ENCODE measurements at regions of chr7 and their contacts with region 1.

Region 1: GRCh38 chr7:151110941-151111645 is 24.8 kb downstream of the AGAP3 start:
- DNase-seq: peak; percentile 96
- H3K4me3 ChIP-seq: no peak overlapping the region; a peak in 1 of 4 replicates
- H3K27ac ChIP-seq: no peak overlapping the region
- H3K4me1 ChIP-seq: peaks cover 24 to 36% of the 10 kb centered on the region in 2 experiments
- H3K27me3 ChIP-seq: no peaks in the 10 kb centered on the region
- CTCF ChIP-seq: peak; percentile 94
- EP300 ChIP-seq: no peak
- RAD21 ChIP-seq: peak; percentile 90

Region 2: GRCh38 chr7:151008511-151009323 is 102.4 kb before region 1 on chr7:
- CTCF ChIA-PET with region 1: interaction called, 101 read pairs
- POLR2A ChIA-PET with region 1: no interaction called
- DNase-seq: peak; percentile 80
- H3K4me3 ChIP-seq: peak overlapping the region in 1 of 2 experiments; percentile 31; a peak in 1 of 4 replicates
- H3K27ac ChIP-seq: no peak overlapping the region
- H3K4me1 ChIP-seq: peaks cover 0 to 24% of the 10 kb centered on the region in 2 experiments; a peak in 1 of 4 replicates
- H3K27me3 ChIP-seq: 0 out of 2 replicates have a peak, but pooled peaks cover 5% of the 10 kb centered on the region
- CTCF ChIP-seq: peak; percentile 59
- EP300 ChIP-seq: no peak
- RAD21 ChIP-seq: no peak

Region 3: GRCh38 chr7:151046603-151047504 is 64.2 kb before region 1 on chr7:
- CTCF ChIA-PET with region 1: interaction called, 10 read pairs
- POLR2A ChIA-PET with region 1: no interaction called
- DNase-seq: peak; percentile 88
- H3K4me3 ChIP-seq: no peak overlapping the region
- H3K27ac ChIP-seq: peak overlapping the region; percentile 61 to 78
- H3K4me1 ChIP-seq: peaks cover 13 to 39% of the 10 kb centered on the region in 2 experiments
- H3K27me3 ChIP-seq: no peaks in the 10 kb centered on the region
- CTCF ChIP-seq: no peak
- EP300 ChIP-seq: no peak; a peak in 1 of 4 replicates
- RAD21 ChIP-seq: no peak

Region 4: DNA sequence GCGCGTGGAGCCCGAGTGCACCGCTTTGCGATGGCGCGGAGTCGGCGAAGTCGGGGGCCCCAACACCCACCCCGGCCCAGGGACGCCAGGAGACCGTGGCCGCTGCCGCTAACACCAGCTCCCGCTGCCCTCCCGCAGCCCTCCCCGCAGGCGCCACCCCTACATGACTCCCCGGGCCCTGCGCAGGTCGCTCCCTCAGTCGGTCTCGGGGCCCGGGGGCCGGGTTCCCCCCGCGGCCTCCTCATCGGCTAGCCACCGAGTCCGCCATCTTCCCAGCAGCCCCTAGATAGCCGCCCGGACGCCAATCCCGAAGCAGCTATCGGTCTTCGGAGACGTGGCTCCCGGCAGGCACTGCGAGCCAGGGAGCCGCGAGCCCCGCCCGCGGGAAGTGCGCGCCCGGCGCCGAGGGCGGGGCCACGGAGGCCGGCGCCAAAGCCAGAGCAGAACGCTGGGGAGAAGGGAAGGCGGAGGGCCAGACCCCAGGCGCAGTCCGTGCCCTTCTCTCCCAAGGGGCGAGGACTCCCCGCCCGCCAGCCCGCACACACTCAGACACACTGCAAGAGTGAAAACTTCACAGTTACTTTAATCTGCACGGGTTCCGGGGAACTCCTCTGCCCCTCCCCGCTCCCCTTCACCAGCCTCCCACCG is 30.4 kb before region 1 on chr7 and contains the start of gene FASTK:
- CTCF ChIA-PET with region 1: interaction called, 474 read pairs
- POLR2A ChIA-PET with region 1: interaction called, 5 read pairs
- DNase-seq: peak; percentile 99
- H3K4me3 ChIP-seq: peak within 1 kb of the TSS; percentile 94 to 99
- H3K27ac ChIP-seq: peak within 1 kb of the TSS; percentile 78 to 95
- H3K4me1 ChIP-seq: peaks cover 30 to 48% of the 10 kb centered on the region in 2 experiments
- H3K27me3 ChIP-seq: no peaks in the 10 kb centered on the region
- CTCF ChIP-seq: no peak
- EP300 ChIP-seq: peak in 1 of 2 experiments; percentile 34; a peak in 1 of 4 replicates
- RAD21 ChIP-seq: no peak
- polyA plus RNA-seq, gene FASTK: 125 and 148 TPM in 2 replicates

Region 5: DNA sequence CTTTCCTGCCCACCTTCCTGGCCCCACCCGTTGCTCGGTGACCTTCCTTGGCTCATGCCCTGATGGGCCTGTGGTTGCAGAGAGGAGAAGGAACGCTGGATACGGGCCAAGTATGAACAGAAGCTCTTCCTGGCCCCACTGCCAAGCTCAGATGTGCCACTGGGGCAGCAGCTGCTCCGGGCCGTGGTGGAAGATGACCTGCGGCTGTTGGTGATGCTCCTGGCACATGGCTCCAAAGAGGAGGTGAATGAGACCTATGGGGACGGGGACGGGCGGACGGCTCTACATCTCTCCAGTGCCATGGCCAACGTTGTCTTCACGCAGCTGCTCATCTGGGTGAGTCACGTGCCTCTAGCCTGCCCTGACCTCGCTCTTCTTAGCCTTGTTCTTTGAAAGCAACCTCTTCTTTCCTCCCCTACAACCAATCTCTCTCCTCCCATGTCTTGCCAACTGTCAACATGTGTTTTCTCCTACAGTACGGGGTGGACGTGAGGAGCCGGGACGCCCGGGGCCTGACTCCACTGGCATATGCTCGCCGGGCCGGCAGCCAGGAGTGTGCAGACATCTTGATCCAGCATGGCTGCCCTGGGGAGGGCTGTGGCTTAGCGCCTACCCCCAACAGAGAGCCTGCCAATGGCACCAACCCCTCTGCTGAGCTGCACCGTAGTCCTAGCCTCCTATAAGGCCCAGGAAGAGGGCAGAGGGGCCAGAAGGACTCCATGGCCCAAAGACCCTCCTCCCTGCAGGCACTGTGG is 32.3 kb after region 1 on chr7:
- CTCF ChIA-PET with region 1: interaction called, 13 read pairs
- POLR2A ChIA-PET with region 1: no interaction called
- DNase-seq: no peak
- H3K4me3 ChIP-seq: no peak overlapping the region
- H3K27ac ChIP-seq: no peak overlapping the region
- H3K4me1 ChIP-seq: peaks cover 0 to 12% of the 10 kb centered on the region in 2 experiments; a peak in 1 of 4 replicates
- H3K27me3 ChIP-seq: no peaks in the 10 kb centered on the region
- CTCF ChIP-seq: no peak
- EP300 ChIP-seq: no peak
- RAD21 ChIP-seq: no peak

Measured in SK-N-SH (cell line).